Dendritic cell treated with granulocyte-macrophage colony-stimulating factor and Interleukin-4, amounts not matched to agents 40 ng/mL and 50 ng/mL, for 4 days (primary cell): ENCODE measurements at regions of chr14 and their contacts with region 1.

Region 1: GRCh38 chr14:89303457-89304435 is 113.3 kb downstream of the FOXN3 start:
- H3K4me3 Mint-ChIP-seq: peak overlapping the region; percentile 78
- H3K27ac Mint-ChIP-seq: peak overlapping the region; percentile 96
- H3K4me1 Mint-ChIP-seq: peaks cover 64% of the 10 kb centered on the region
- H3K27me3 Mint-ChIP-seq: no peaks in the 10 kb centered on the region

Region 2: GRCh38 chr14:89365061-89365801 is 61.5 kb after region 1 on chr14:
- intact Hi-C with region 1: loop called (anchors 1 kb)
- H3K4me3 Mint-ChIP-seq: peak overlapping the region; percentile 34
- H3K27ac Mint-ChIP-seq: peak overlapping the region; percentile 86
- H3K4me1 Mint-ChIP-seq: peaks cover 62% of the 10 kb centered on the region
- H3K27me3 Mint-ChIP-seq: no peaks in the 10 kb centered on the region